ENCODE measurements at regions of chr2 and their contacts with region 1.

Region 1: GRCh38 chr2:18891600-18892345 is 302.4 kb upstream of the NT5C1B start:
- DNase-seq: no peak
- ATAC-seq: no peak
- H3K4me3 ChIP-seq: no peak overlapping the region
- H3K4me3 Mint-ChIP-seq: no peak overlapping the region
- H3K27ac ChIP-seq: no peak overlapping the region
- H3K27ac Mint-ChIP-seq: no peak overlapping the region
- H3K4me1 ChIP-seq: no peaks in the 10 kb centered on the region
- H3K4me1 Mint-ChIP-seq: peaks cover 0 to 1% (median 0%) of the 10 kb centered on the region in 7 donors
- H3K27me3 ChIP-seq: no peaks in the 10 kb centered on the region
- H3K27me3 Mint-ChIP-seq: no peaks in the 10 kb centered on the region

Region 2: DNA sequence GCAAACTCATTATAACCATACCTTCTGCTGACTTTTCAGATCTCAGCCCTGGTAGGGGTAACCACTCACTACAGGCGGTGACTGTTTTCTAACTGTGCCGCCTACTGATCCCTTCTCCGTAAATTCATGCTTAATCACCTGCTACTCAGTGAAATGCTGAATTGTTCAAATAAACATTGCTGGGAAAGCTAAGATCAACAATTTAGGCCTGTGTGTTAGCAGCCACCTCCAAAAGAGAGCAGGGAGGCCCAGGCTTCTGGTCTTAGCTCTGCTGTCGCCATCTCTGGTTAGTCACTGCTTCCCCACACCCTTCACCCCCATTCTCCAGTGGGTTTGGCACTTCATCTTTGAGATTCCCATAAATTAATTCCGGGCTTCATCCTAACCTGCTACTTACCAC is 280.6 kb before region 1 on chr2:
- CTCF ChIA-PET with region 1: no interaction called
- POLR2A ChIA-PET with region 1: no interaction called
- intact Hi-C with region 1: no loop called
- DNase-seq: no peak
- ATAC-seq: no peak
- H3K4me3 ChIP-seq: no peak overlapping the region
- H3K4me3 Mint-ChIP-seq: no peak overlapping the region
- H3K27ac ChIP-seq: no peak overlapping the region
- H3K27ac Mint-ChIP-seq: no peak overlapping the region
- H3K4me1 ChIP-seq: no peaks in the 10 kb centered on the region
- H3K4me1 Mint-ChIP-seq: peaks cover 0 to 13% (median 0%) of the 10 kb centered on the region in 7 donors
- H3K27me3 ChIP-seq: no peaks in the 10 kb centered on the region
- H3K27me3 Mint-ChIP-seq: no peaks in the 10 kb centered on the region

Region 3: GRCh38 chr2:18922276-18922675 is 30.5 kb after region 1 on chr2:
- CTCF ChIA-PET with region 1: no interaction called
- POLR2A ChIA-PET with region 1: no interaction called
- intact Hi-C with region 1: loop called in 1 of 2 experiments (anchors 1 kb)
- DNase-seq: no peak
- ATAC-seq: no peak
- H3K4me3 ChIP-seq: no peak overlapping the region
- H3K4me3 Mint-ChIP-seq: no peak overlapping the region
- H3K27ac ChIP-seq: no peak overlapping the region
- H3K27ac Mint-ChIP-seq: no peak overlapping the region
- H3K4me1 ChIP-seq: no peaks in the 10 kb centered on the region
- H3K4me1 Mint-ChIP-seq: peaks cover 0 to 3% (median 0%) of the 10 kb centered on the region in 7 donors
- H3K27me3 ChIP-seq: no peaks in the 10 kb centered on the region
- H3K27me3 Mint-ChIP-seq: no peaks in the 10 kb centered on the region

Measured in naive thymus-derived CD4-positive, alpha-beta T cell (primary cell).